ENCODE measurements at regions of chr3 and their contacts with region 1.

Region 1: DNA sequence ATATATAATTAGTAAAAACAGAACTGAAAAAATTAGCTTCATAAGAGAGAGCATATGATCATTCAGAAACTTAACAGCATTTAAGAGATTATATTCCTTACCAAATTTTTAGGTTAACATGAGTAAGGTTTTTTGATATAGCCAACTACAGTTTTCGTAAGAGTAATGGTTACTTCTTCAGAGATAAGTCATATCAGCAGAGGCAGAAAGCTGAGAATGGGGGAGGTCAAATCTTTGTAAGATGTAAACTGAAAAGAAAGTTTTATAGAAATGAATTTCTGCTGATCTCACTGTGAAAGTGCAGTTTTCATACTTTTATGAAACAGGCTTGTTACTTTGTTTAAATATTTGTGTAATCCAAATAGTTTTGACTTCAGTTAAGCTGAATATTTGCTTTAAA is 193.3 kb downstream of the ZBTB20 start:
- DNase-seq: no peak
- H3K4me3 ChIP-seq: no peak overlapping the region
- H3K27ac ChIP-seq: no peak overlapping the region
- H3K4me1 ChIP-seq: no peaks in the 10 kb centered on the region
- H3K27me3 ChIP-seq: no peaks in the 10 kb centered on the region
- CTCF ChIP-seq: no peak
- EP300 ChIP-seq: no peak
- POLR2A ChIP-seq: no peak

Region 2: GRCh38 chr3:114519415-114519814 is 434.4 kb before region 1 on chr3:
- in situ Hi-C with region 1: no loop called
- intact Hi-C with region 1: no loop called
- DNase-seq: no peak
- H3K4me3 ChIP-seq: no peak overlapping the region
- H3K27ac ChIP-seq: no peak overlapping the region
- H3K4me1 ChIP-seq: peaks cover 0 to 6% (median 0%) of the 10 kb centered on the region in 4 donors
- H3K27me3 ChIP-seq: no peaks in the 10 kb centered on the region
- CTCF ChIP-seq: no peak
- EP300 ChIP-seq: no peak
- POLR2A ChIP-seq: no peak

Region 3: GRCh38 chr3:115004201-115005140 is 50.7 kb after region 1 on chr3:
- in situ Hi-C with region 1: no loop called
- intact Hi-C with region 1: loop called (anchors 2 kb)
- DNase-seq: no peak
- H3K4me3 ChIP-seq: no peak overlapping the region
- H3K27ac ChIP-seq: no peak overlapping the region
- H3K4me1 ChIP-seq: no peaks in the 10 kb centered on the region
- H3K27me3 ChIP-seq: no peaks in the 10 kb centered on the region
- CTCF ChIP-seq: no peak
- EP300 ChIP-seq: no peak
- POLR2A ChIP-seq: no peak

Measured in transverse colon (tissue), 4 donors.